G401 (cell line): ENCODE measurements at regions of chr22 and their contacts with region 1.

Region 1: GRCh38 chr22:49567899-49568750 is 259.5 kb downstream of the BRD1 start:
- DNase-seq: no peak

Region 2: DNA sequence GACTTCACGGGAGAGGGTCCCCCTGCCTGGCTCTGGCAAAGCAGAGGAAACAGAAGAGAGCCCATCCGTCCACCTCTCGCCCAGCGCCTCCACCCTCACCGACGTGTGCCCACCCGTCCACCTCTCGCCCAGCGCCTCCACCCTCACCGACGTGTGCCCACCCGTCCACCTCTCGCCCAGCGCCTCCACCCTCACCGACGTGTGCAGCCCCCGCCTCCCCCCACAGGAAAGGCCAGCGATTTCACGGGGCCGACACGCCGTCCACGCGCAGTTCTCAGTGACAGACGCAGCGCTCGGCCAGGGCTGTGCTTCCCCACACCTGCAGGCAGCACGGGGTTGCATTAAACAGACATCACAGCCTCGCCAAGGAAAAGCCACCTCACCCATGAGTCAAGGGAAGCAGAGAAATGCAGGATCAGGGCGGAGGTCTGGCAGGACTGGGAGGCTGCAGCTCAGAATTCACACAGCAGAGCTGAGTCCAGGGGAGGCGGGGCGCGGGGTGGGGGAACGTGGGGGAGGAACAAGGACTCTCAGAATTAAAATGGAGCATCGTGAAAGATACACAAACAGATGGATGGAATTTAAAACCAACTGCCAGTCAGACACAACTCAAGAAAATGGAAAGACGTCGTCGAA is 118.2 kb before region 1 on chr22:
- in situ Hi-C with region 1: loop called (anchors 10 kb)
- DNase-seq: no peak